ENCODE measurements at regions of chr11 and their contacts with region 1.

Region 1: GRCh38 chr11:78139422-78140391 is at the start of gene ALG8:
- DNase-seq: peak; percentile 96
- H3K4me3 ChIP-seq: peak within 1 kb of the TSS; percentile 82
- H3K27ac ChIP-seq: peak within 1 kb of the TSS; percentile 75
- H3K4me1 ChIP-seq: peaks cover 46% of the 10 kb centered on the region
- CTCF ChIP-seq: no peak
- total RNA-seq, gene ALG8: 42.5 and 43.7 TPM in 2 replicates

Region 2: DNA sequence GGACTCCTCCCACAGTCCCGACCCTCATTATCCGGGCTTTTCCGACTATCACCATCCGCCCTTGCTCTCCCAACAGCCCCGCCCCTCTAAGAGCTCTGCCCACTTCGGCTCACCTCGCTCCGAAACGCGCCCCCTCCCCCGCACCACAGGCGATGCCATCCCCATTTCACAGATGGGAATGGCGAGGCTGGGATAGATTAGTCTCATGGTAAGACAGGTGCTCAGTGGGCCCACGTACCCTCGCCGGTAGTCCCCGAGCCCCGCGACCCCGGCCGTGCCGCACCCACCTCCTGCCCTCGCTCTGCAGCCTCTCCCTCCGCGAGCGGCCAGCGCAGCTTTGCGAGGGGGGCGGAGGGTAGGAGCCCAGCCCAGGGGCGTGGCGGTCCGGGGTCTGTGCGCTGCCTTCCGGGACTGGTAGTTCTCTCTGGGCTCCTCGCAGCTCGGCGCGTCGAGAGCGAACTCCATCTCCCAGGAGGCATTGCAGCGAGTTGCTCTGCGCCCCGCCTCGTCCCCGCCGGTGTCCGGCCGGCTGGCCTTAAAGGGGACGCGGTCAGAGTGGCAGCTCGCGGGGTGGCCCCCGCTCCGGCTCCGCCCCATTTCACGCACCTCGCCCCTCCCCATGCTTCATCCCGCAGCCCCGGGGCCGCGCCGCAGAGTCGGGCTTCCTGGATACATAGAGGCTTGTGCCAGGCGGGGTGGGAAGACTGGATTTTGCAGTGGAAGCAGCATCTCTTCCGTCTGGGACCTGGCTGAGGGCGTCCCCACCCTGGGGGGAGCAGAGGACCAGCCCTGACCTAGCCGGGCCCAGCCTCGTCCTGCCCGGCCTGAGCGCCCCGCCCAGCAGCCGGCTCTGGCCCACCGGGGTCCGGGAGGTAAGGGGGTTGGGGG is 48.8 kb after region 1 on chr11 and contains the starts of genes KCTD21 and USP35:
- CTCF ChIA-PET with region 1: no interaction called
- POLR2A ChIA-PET with region 1: interaction called, 4 read pairs
- intact Hi-C with region 1: loop called (anchors 1 kb)
- DNase-seq: peak; percentile 95
- H3K4me3 ChIP-seq: peak within 1 kb of the TSS; percentile 79
- H3K27ac ChIP-seq: no peak within 1 kb of the TSS
- H3K4me1 ChIP-seq: peaks cover 24% of the 10 kb centered on the region
- CTCF ChIP-seq: no peak
- total RNA-seq, gene KCTD21: 1.5 and 2.8 TPM in 2 replicates
- total RNA-seq, gene USP35: 3.2 and 3.4 TPM in 2 replicates

Region 3: DNA sequence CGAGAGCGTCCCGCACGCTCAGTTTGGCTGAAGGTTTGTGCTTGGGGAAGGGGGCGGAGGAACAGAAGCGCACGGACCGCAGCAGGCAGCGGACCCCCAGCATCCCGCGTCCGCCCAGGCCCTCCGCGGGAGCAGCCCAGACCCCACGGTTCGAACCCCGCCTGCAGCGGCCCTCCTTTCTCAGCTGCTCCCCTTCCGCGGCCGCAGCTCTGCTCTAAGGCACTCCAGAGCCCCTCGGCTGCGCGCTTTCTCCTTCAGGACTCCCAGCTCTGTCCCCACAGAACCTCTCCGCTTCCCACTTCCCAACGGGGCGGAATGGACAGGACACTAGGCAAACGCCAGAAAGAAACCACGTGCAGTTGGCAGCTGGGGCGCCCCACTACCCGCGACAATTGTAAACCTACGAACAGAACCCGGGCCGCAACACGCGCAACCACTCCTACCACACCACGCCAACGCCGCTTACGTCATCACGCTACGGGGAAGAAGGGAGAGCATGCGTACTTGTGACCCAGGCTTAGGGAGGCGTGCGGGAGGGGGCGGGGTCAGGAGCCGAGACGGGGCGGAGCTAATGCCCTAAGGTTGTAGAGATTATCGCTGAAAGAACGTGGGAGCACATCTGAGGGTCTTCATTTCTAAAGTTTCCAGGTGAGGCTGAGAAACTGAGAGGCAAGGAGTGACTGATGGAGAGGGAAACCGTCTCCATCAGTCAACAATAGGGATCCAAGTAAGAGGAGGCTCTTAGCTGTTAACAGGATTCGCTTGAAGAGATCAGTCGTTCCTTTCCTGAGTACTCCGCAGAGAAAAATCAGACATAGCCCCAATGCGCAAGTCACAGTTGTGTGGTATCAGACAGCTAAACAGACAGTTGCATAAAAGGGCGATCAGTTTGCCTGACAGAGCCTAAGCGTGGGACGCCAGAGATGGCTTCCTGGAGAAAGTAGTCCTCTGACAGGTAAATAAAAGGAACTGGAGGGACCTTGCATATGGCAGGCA is 435.0 kb after region 1 on chr11 and contains the start of gene NARS2:
- CTCF ChIA-PET with region 1: no interaction called
- POLR2A ChIA-PET with region 1: no interaction called
- intact Hi-C with region 1: loop called (anchors 5 kb)
- DNase-seq: peak; percentile 96
- H3K4me3 ChIP-seq: peak within 1 kb of the TSS; percentile 92
- H3K27ac ChIP-seq: peak within 1 kb of the TSS; percentile 18
- H3K4me1 ChIP-seq: peaks cover 18% of the 10 kb centered on the region
- CTCF ChIP-seq: no peak
- total RNA-seq, gene NARS2: 25.5 and 28.1 TPM in 2 replicates